ENCODE measurements at regions of chr14 and their contacts with region 1.

Region 1: GRCh38 chr14:71343724-71344123 is 436.5 kb downstream of the PCNX1 start:
- DNase-seq: no peak
- CTCF ChIP-seq: no peak

Region 2: DNA sequence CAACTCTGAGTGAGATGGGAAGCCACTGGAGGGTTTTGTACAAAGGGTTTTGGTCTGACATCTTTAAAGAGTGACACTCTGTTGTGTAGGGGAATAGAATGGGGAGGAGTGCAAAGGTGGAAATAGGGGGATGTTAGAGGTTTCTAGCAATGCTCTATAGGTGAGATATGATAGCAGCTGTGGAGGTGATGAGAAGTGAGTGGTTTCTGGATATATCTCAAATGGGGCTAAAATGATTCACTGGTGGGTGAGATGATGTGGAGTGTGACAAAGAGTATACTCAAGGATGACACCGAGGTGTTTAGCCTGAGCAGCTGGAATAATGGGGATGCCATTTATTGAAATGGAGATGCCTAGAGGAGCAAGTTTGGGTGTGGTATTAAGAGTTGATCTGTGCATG is 10.0 kb before region 1 on chr14:
- CTCF ChIA-PET with region 1: interaction called, 11 read pairs
- POLR2A ChIA-PET with region 1: no interaction called
- DNase-seq: no peak
- CTCF ChIP-seq: no peak

Measured in GM10248 (cell line).